Activated naive CD4-positive, alpha-beta T cell treated with anti-CD3 and anti-CD28 coated beads for 36 hours (primary cell): ENCODE measurements at regions of chr7 and their contacts with region 1.

Region 1: DNA sequence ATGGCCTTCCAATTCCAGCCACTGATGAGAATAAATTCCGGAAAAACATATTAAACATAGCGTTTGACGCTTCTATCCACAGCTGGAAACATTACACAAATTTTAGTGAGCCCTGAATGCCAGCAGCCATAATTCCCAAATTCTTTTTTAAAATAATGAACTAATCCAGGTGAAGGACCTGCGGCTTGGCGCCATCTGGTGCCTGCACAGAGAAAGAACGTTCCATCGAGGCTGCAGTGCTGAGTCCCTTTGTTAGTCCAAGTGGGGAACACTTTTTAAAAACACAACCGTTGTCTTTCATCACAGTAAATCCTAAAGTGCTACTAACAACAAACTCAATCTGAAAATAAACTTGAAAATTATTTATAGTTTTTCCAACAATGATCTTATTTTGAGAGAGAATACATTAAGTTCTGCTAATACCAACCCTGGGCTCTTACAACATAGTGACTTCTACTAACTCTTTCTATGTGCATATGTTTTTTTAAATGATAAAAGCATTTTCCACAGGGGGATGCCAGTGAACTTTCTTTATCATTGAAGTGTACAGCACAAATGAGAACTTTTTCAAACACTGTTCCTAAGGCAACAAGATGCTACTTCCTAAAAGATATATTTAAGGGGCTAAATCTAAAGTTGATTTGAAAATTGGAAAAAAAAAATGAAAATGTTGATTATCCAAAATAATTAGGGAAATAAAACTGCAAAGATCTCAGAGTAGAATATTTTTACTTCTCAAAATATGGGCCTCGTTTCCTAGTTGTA is 166.9 kb upstream of the RNF32 start:
- DNase-seq: peak; percentile 48
- H3K4me3 Mint-ChIP-seq: no peak overlapping the region
- H3K27ac Mint-ChIP-seq: no peak overlapping the region
- H3K4me1 Mint-ChIP-seq: no peaks in the 10 kb centered on the region
- H3K27me3 Mint-ChIP-seq: peaks cover 22% of the 10 kb centered on the region

Region 2: GRCh38 chr7:156827587-156828203 is 354.0 kb after region 1 on chr7:
- CTCF ChIA-PET with region 1: no interaction called
- intact Hi-C with region 1: loop called (anchors 10 kb)
- DNase-seq: peak; percentile 10
- H3K4me3 Mint-ChIP-seq: no peak overlapping the region
- H3K27ac Mint-ChIP-seq: no peak overlapping the region
- H3K4me1 Mint-ChIP-seq: no peaks in the 10 kb centered on the region
- H3K27me3 Mint-ChIP-seq: no peaks in the 10 kb centered on the region